CD8-positive, alpha-beta T cell (primary cell): ENCODE measurements at regions of chr2 and their contacts with region 1.

Region 1: GRCh38 chr2:42494355-42495233 is 812 bp upstream of the KCNG3 start:
- DNase-seq: peak; percentile 51 to 84 (median 75)
- ATAC-seq: peak; percentile 43
- H3K4me3 ChIP-seq: peak overlapping the region; percentile 58 to 74
- H3K4me3 Mint-ChIP-seq: peak overlapping the region; percentile 93
- H3K27ac ChIP-seq: peak overlapping the region in 1 of 2 experiments; percentile 15
- H3K27ac Mint-ChIP-seq: peak overlapping the region; percentile 89
- H3K4me1 ChIP-seq: no peaks in the 10 kb centered on the region
- H3K4me1 Mint-ChIP-seq: peaks cover 32% of the 10 kb centered on the region
- H3K27me3 ChIP-seq: peaks cover 0 to 4% of the 10 kb centered on the region in 2 experiments
- H3K27me3 Mint-ChIP-seq: peaks cover 9% of the 10 kb centered on the region
- CTCF ChIP-seq: peak; percentile 92

Region 2: DNA sequence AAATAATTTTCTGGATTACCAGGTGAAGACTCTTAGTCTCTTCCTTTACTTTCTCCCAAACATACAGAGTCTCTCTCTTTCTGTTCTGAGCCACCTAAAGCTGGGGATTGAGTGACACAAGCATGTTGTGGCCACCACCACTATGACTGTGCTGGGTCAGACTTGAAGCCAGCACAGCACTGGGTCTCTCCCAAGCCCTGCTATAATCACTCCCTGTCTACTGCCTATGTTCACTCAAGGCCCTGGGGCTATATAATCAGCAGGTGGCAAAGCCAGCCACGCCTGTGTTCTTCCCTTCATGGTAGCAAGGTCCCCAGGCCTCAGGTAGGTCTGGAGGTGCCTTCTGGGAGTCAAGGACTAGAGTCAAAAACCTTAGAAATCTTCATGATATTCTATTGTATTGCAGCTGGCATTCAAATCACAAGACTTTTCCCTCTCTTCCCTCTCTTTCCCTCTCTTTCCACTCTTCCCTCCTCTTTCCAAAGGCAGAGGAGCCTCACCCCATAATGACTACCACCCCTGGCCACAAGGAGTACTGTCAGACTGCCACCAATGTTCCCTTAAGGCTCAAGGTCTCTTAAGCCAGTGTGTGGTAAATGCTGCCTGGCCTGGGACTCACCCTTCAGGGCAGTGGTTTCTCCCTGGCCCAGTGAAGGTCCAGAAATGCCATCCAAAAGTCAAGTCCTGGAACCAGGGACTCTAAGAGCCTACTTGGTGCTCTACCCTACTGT is 1052.8 kb before region 1 on chr2:
- CTCF ChIA-PET with region 1: no interaction called
- POLR2A ChIA-PET with region 1: no interaction called
- intact Hi-C with region 1: no loop called
- DNase-seq: no peak
- ATAC-seq: no peak
- H3K4me3 ChIP-seq: no peak overlapping the region
- H3K4me3 Mint-ChIP-seq: no peak overlapping the region
- H3K27ac ChIP-seq: no peak overlapping the region
- H3K27ac Mint-ChIP-seq: no peak overlapping the region
- H3K4me1 ChIP-seq: no peaks in the 10 kb centered on the region
- H3K4me1 Mint-ChIP-seq: no peaks in the 10 kb centered on the region
- H3K27me3 ChIP-seq: no peaks in the 10 kb centered on the region
- H3K27me3 Mint-ChIP-seq: peaks cover 2% of the 10 kb centered on the region
- CTCF ChIP-seq: no peak

Region 3: DNA sequence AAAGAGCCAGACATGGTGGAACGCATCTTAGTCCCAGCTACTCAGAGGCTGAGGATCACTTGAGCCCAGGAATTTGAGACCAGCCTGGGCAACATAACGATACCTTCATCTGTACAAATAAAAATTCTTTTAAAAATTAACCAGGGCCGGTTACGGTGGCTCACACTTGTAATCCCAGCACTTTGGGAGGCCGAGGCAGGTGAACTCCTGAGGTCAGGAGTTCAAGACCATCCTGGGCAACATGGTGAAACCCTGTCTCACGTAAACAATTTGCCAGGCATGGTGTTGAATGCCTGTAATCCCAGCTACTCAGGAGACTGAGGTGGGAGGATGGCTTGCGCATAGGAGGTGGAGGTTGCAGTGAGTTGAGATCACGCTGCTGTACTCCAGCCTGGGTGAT is 25.0 kb after region 1 on chr2:
- CTCF ChIA-PET with region 1: no interaction called
- POLR2A ChIA-PET with region 1: no interaction called
- intact Hi-C with region 1: no loop called
- DNase-seq: no peak
- ATAC-seq: no peak
- H3K4me3 ChIP-seq: no peak overlapping the region
- H3K4me3 Mint-ChIP-seq: no peak overlapping the region
- H3K27ac ChIP-seq: no peak overlapping the region
- H3K27ac Mint-ChIP-seq: no peak overlapping the region
- H3K4me1 ChIP-seq: peaks cover 7% of the 10 kb centered on the region
- H3K4me1 Mint-ChIP-seq: peaks cover 12% of the 10 kb centered on the region
- H3K27me3 ChIP-seq: no peaks in the 10 kb centered on the region
- H3K27me3 Mint-ChIP-seq: no peaks in the 10 kb centered on the region
- CTCF ChIP-seq: no peak

Region 4: GRCh38 chr2:42568401-42569115 is 74.0 kb after region 1 on chr2 and contains the start of gene MTA3:
- CTCF ChIA-PET with region 1: no interaction called
- POLR2A ChIA-PET with region 1: no interaction called
- intact Hi-C with region 1: loop called (anchors 2 to 5 kb)
- DNase-seq: peak; percentile 37 to 82 (median 66)
- ATAC-seq: peak; percentile 69
- H3K4me3 ChIP-seq: peak within 1 kb of the TSS; percentile 63 to 65
- H3K4me3 Mint-ChIP-seq: peak within 1 kb of the TSS; percentile 90
- H3K27ac ChIP-seq: peak within 1 kb of the TSS in 1 of 2 experiments; percentile 3
- H3K27ac Mint-ChIP-seq: peak within 1 kb of the TSS; percentile 92
- H3K4me1 ChIP-seq: peaks cover 37% of the 10 kb centered on the region
- H3K4me1 Mint-ChIP-seq: peaks cover 46% of the 10 kb centered on the region
- H3K27me3 ChIP-seq: no peaks in the 10 kb centered on the region
- H3K27me3 Mint-ChIP-seq: no peaks in the 10 kb centered on the region
- CTCF ChIP-seq: no peak
- total RNA-seq, gene MTA3: 17.6 to 18.4 TPM